AG04450 (cell line): ENCODE measurements at regions of chr1 and their contacts with region 1.

Region 1: DNA sequence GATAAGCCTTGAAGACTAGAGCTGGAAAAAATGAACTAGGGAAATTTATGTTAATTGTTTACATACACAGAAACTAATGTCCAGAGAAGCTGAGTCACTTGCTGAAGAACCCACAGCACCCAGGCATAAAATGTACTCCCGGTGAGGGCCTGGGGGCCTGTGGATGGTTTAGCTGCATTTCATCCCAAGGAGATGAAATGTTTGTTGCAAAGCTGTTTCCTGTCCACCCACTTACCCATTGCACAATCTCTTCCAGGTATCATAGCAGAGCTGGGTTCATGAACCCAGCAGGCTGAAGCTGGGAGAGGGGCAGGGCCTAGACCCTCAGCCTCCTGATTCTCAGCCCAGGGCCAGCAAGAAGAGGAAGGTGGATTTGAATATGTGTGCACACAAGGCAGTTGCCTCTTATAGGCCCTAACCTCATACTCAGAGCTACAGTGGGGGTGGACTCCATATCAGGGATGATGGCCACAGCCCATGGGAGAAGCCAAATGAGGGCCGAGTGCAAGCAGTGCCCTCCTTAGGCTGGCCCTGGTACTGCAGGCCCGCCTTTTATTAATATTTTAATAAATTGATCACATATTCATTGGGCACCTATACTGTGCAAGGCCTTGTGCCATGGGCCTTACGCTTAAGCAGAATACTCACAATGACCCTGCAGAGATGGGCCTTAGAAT is 110.8 kb downstream of the LACTBL1 start:
- DNase-seq: peak; percentile 45
- H3K4me3 ChIP-seq: no peak overlapping the region
- H3K27ac ChIP-seq: peak overlapping the region; percentile 74
- H3K27me3 ChIP-seq: no peaks in the 10 kb centered on the region
- CTCF ChIP-seq: peak; percentile 97

Region 2: DNA sequence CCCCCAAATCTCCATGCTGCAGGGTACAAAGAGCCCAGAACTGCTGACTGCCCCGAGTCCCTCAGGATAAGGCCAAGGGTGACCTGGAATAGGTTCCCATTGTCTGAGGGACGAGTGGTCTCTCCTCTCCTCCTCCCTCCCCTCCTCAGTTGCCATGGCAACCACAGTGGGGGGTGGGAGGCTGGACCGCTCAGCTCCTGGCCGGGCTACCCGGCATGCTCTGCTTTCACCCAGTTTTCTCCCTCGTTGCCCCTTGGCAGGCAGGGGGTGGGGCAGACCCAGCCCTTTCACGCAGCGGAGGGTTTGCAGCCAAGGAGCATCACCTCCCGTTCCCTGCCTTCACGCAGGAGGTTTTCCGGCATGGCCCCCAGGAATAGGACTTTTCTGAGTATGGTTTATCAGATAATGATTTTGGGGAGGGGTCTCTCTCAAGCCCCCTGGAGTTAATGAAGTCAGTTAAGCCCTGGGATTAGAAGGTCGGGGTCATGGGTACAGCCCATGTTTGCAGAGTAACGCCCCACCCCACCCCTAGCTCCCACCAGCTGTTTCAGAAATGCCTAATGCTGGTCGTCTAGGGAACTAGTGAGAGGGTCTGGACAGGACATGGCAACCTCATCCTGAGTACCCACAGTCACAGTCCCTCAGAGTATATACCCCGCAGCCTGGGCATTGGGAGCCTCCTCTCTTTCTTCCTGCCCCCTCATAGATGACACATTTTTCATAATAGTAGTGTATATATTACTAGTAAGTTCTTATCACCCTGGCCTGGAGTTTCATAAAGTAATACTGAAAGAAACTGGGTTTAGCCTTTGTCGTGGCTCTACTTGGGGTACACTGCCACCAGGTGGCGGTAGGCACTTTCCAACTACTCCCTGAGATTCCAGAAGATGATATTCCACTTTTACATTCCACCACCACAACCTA is 188.2 kb before region 1 on chr1:
- CTCF ChIA-PET with region 1: interaction called, 17 read pairs
- POLR2A ChIA-PET with region 1: no interaction called
- DNase-seq: peak; percentile 39
- H3K4me3 ChIP-seq: no peak overlapping the region
- H3K27ac ChIP-seq: no peak overlapping the region
- H3K27me3 ChIP-seq: peaks cover 30% of the 10 kb centered on the region
- CTCF ChIP-seq: peak; percentile 91

Region 3: GRCh38 chr1:22709891-22710700 is 151.8 kb before region 1 on chr1:
- CTCF ChIA-PET with region 1: interaction called, 74 read pairs
- POLR2A ChIA-PET with region 1: interaction called, 4 read pairs
- DNase-seq: no peak
- H3K4me3 ChIP-seq: peak overlapping the region; percentile 69
- H3K27ac ChIP-seq: no peak overlapping the region
- H3K27me3 ChIP-seq: no peaks in the 10 kb centered on the region
- CTCF ChIP-seq: no peak

Region 4: GRCh38 chr1:22798083-22798482 is 63.8 kb before region 1 on chr1:
- CTCF ChIA-PET with region 1: no interaction called
- POLR2A ChIA-PET with region 1: no interaction called
- DNase-seq: no peak
- H3K4me3 ChIP-seq: no peak overlapping the region
- H3K27ac ChIP-seq: no peak overlapping the region
- H3K27me3 ChIP-seq: no peaks in the 10 kb centered on the region
- CTCF ChIP-seq: no peak

Region 5: GRCh38 chr1:22808676-22809483 is 53.0 kb before region 1 on chr1:
- CTCF ChIA-PET with region 1: interaction called, 10 read pairs
- POLR2A ChIA-PET with region 1: interaction called, 5 read pairs
- DNase-seq: peak; percentile 37
- H3K4me3 ChIP-seq: no peak overlapping the region
- H3K27ac ChIP-seq: peak overlapping the region; percentile 77
- H3K27me3 ChIP-seq: no peaks in the 10 kb centered on the region
- CTCF ChIP-seq: no peak

Region 6: DNA sequence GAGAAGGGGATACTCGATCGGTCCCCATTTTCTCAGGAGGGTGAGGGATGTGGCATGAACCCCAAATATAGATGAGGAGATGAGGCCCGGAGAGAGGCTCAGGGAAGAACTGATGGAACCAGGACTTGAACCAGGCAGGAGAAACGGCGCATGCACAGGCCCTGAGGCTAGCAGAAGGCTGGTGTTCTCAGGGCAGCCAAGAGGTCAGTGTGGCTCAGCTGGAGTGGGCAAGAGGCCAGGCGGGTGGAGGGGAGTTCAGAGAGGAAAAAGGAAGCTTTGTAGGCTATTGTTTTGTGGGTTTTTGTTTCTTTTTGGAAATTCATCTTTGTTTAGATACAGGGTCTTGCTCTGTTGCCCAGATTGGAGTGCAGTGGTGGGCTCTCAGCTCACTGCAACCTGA is 11.2 kb before region 1 on chr1:
- CTCF ChIA-PET with region 1: interaction called, 17 read pairs
- POLR2A ChIA-PET with region 1: interaction called, 3 read pairs
- DNase-seq: no peak
- H3K4me3 ChIP-seq: no peak overlapping the region
- H3K27ac ChIP-seq: no peak overlapping the region
- H3K27me3 ChIP-seq: no peaks in the 10 kb centered on the region
- CTCF ChIP-seq: no peak